ENCODE measurements at regions of chr2 and their contacts with region 1.

Region 1: GRCh38 chr2:111897924-111898702 is at the start of gene MERTK:
- DNase-seq: peak; percentile 79 to 82
- H3K4me3 ChIP-seq: peak within 1 kb of the TSS; percentile 73 to 94 (median 93)
- H3K27ac ChIP-seq: peak within 1 kb of the TSS; percentile 83 to 85
- H3K4me1 ChIP-seq: no peaks in the 10 kb centered on the region
- H3K27me3 ChIP-seq: no peaks in the 10 kb centered on the region
- CTCF ChIP-seq: peak; percentile 34 to 66 (median 56)
- POLR2A ChIP-seq: peak; percentile 47
- total RNA-seq, gene MERTK: 21.0 to 84.3 (median 36.3) TPM

Region 2: GRCh38 chr2:111967018-111967417 is 68.9 kb after region 1 on chr2:
- intact Hi-C with region 1: no loop called
- DNase-seq: no peak
- H3K4me3 ChIP-seq: no peak overlapping the region
- H3K27ac ChIP-seq: no peak overlapping the region
- H3K4me1 ChIP-seq: no peaks in the 10 kb centered on the region
- H3K27me3 ChIP-seq: no peaks in the 10 kb centered on the region
- CTCF ChIP-seq: no peak
- POLR2A ChIP-seq: no peak

Region 3: GRCh38 chr2:112035786-112036185 is 137.7 kb after region 1 on chr2:
- intact Hi-C with region 1: loop called (anchors 5 kb)
- DNase-seq: no peak
- H3K4me3 ChIP-seq: no peak overlapping the region
- H3K27ac ChIP-seq: no peak overlapping the region
- H3K4me1 ChIP-seq: peaks cover 4 to 8% of the 10 kb centered on the region in 2 donors
- H3K27me3 ChIP-seq: no peaks in the 10 kb centered on the region
- CTCF ChIP-seq: no peak
- POLR2A ChIP-seq: no peak

Region 4: GRCh38 chr2:112048887-112049286 is 150.8 kb after region 1 on chr2:
- intact Hi-C with region 1: loop called (anchors 1 kb)
- DNase-seq: no peak
- H3K4me3 ChIP-seq: no peak overlapping the region
- H3K27ac ChIP-seq: no peak overlapping the region
- H3K4me1 ChIP-seq: no peaks in the 10 kb centered on the region
- H3K27me3 ChIP-seq: no peaks in the 10 kb centered on the region
- CTCF ChIP-seq: peak; percentile 73 to 93 (median 89)
- POLR2A ChIP-seq: no peak

Region 5: DNA sequence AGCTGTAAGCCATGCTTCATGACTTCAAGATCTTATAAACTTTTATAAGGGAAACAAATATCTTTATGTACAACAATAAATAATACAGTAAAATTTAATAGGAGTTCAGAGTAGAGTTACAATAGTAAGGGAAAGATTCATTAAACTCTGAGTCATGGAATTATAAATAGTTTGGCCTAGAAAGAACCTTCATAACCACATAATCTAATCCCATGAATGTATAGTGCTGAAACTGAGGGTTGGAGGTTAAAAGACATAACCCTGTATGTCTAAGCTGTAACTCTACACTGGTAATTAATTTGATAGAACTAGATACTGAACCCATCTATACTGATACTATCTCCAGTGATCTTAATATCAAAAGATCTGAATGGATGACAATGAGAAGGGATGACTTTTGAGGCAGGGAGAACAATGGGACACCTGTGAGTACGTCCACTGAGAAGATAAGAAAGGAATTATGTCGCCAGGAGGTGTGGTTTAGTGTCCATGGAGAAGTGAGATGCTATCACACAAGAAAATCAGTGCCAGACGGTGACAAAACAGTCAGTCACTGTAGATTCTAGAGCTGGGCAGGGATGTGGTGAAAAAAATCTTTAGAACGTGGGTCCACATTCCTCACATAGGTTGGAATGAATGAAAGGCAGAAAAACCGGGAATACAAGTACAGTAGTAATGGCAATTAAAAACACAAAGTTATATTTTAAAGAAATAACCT is 1170.8 kb after region 1 on chr2:
- intact Hi-C with region 1: no loop called
- DNase-seq: no peak
- H3K4me3 ChIP-seq: no peak overlapping the region
- H3K27ac ChIP-seq: no peak overlapping the region
- H3K4me1 ChIP-seq: no peaks in the 10 kb centered on the region
- H3K27me3 ChIP-seq: no peaks in the 10 kb centered on the region
- CTCF ChIP-seq: no peak
- POLR2A ChIP-seq: no peak

Measured in breast epithelium (tissue), 4 donors.